Activated B cell treated with CpG ODN at 0.5 μM for 24 hours (primary cell): ENCODE measurements at regions of chrX and their contacts with region 1.

Region 1: DNA sequence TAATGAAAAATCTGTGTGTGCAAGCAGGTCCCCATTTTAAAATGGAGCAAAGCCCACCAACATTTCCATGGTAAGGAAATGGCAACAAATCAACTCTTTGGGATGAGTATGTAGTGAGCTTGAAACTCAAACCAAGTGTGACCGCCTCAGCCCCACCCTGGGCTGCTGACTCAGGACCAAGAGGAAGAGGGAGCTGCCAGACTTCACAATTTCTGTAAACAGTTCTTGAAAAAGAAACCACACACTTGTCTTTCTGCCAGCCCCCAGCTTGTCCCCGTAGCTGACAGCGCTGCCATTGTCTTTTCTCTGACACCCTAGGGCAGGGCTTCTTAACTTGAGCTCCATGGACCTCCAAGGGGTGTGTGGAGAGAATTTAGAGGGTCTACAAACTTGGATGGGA is 10.3 kb downstream of the RTL5 start:
- DNase-seq: no peak
- ATAC-seq: peak; percentile 75
- H3K4me3 Mint-ChIP-seq: peak overlapping the region; percentile 28
- H3K27ac Mint-ChIP-seq: peak overlapping the region; percentile 24
- H3K4me1 Mint-ChIP-seq: peaks cover 31% of the 10 kb centered on the region
- H3K27me3 Mint-ChIP-seq: no peaks in the 10 kb centered on the region
- CTCF ChIP-seq: no peak

Region 2: GRCh38 chrX:72100824-72101351 is 20.5 kb before region 1 on chrX:
- CTCF ChIA-PET with region 1: no interaction called
- POLR2A ChIA-PET with region 1: no interaction called
- intact Hi-C with region 1: loop called (anchors 1 kb)
- DNase-seq: peak; percentile 35
- ATAC-seq: peak; percentile 80
- H3K4me3 Mint-ChIP-seq: peak overlapping the region; percentile 38
- H3K27ac Mint-ChIP-seq: peak overlapping the region; percentile 79
- H3K4me1 Mint-ChIP-seq: peaks cover 62% of the 10 kb centered on the region
- H3K27me3 Mint-ChIP-seq: peaks cover 2% of the 10 kb centered on the region
- CTCF ChIP-seq: no peak

Region 3: DNA sequence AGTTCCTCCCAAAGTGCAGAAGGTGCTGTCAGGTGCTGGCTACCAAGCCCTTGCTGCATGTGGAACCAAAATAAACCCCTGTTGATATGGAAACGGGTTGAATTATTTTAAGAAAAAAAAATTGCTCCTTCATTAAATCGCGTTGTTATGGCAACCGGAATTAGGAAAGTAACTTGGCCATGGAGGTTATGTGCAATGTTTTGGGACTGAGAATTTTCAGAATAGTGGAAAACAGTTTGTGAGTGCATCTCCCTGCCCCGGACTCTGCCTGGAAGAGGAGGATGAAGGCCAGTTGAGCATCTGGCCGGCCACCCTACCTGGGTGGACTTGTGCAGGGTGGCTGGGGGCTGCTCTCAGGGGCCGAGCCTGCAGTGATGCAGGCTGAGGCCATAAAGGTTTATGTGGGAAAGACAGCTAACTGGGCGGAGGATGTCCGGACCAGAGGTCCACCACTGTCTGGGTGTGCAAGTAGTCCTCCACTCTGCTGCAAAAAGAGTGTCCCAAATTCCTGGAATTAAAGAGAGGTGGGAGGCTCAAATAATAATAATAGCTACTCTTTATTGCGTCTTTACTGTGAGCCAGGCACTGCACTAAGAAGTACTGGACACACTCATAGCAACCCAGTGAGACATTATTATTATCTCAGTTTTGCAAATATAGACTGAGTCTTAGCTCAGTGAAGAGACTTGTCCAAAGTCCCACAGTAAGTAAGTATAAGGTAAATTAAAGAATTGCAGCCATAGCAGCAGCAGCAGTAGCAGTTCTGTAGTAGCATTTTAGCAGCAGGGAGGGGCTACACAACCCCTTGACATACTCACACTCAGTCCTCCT is 10.3 kb before region 1 on chrX:
- CTCF ChIA-PET with region 1: no interaction called
- POLR2A ChIA-PET with region 1: no interaction called
- intact Hi-C with region 1: no loop called
- DNase-seq: no peak
- ATAC-seq: no peak
- H3K4me3 Mint-ChIP-seq: no peak overlapping the region
- H3K27ac Mint-ChIP-seq: no peak overlapping the region
- H3K4me1 Mint-ChIP-seq: peaks cover 6% of the 10 kb centered on the region
- H3K27me3 Mint-ChIP-seq: peaks cover 3% of the 10 kb centered on the region
- CTCF ChIP-seq: no peak